ENCODE measurements at regions of chr1 and their contacts with region 1.

Region 1: GRCh38 chr1:66924756-66925557 is at the starts of genes DNAI4 and MIER1:
- DNase-seq: peak; percentile 96
- ATAC-seq: peak; percentile 95
- H3K4me3 ChIP-seq: peak within 1 kb of the TSS; percentile 78 to 97 (median 83)
- H3K27ac ChIP-seq: peak within 1 kb of the TSS; percentile 90
- H3K4me1 ChIP-seq: peaks cover 45% of the 10 kb centered on the region
- H3K27me3 ChIP-seq: no peaks in the 10 kb centered on the region; a peak in 1 of 5 replicates
- CTCF ChIP-seq: peak; percentile 46
- EP300 ChIP-seq: no peak
- POLR2A ChIP-seq: peak; percentile 71 to 75
- RAD21 ChIP-seq: peak; percentile 28; the same call in 1 of the 2 replicates
- total RNA-seq, gene DNAI4: 0.04 and 0.38 TPM in 2 replicates
- total RNA-seq, gene MIER1: 30.4 and 49.3 TPM in 2 replicates

Region 2: GRCh38 chr1:66764994-66765578 is 159.9 kb before region 1 on chr1:
- CTCF ChIA-PET with region 1: no interaction called
- POLR2A ChIA-PET with region 1: no interaction called
- in situ Hi-C with region 1: no loop called
- intact Hi-C with region 1: loop called (anchors 5 kb)
- DNase-seq: peak; percentile 24
- ATAC-seq: peak; percentile 56; the same call in 2 of the 3 replicates
- H3K4me3 ChIP-seq: no peak overlapping the region
- H3K27ac ChIP-seq: no peak overlapping the region
- H3K4me1 ChIP-seq: no peaks in the 10 kb centered on the region
- H3K27me3 ChIP-seq: no peaks in the 10 kb centered on the region
- CTCF ChIP-seq: peak; percentile 67
- EP300 ChIP-seq: no peak
- POLR2A ChIP-seq: no peak
- RAD21 ChIP-seq: peak; percentile 30; the same call in 1 of the 2 replicates

Region 3: GRCh38 chr1:66852870-66853269 is 72.1 kb before region 1 on chr1:
- CTCF ChIA-PET with region 1: no interaction called
- POLR2A ChIA-PET with region 1: no interaction called
- in situ Hi-C with region 1: no loop called
- intact Hi-C with region 1: no loop called
- DNase-seq: no peak
- ATAC-seq: no peak
- H3K4me3 ChIP-seq: no peak overlapping the region
- H3K27ac ChIP-seq: no peak overlapping the region
- H3K4me1 ChIP-seq: no peaks in the 10 kb centered on the region
- H3K27me3 ChIP-seq: no peaks in the 10 kb centered on the region
- CTCF ChIP-seq: no peak
- EP300 ChIP-seq: no peak
- POLR2A ChIP-seq: no peak
- RAD21 ChIP-seq: no peak

Region 4: GRCh38 chr1:66890621-66891020 is 34.3 kb before region 1 on chr1:
- CTCF ChIA-PET with region 1: no interaction called
- POLR2A ChIA-PET with region 1: no interaction called
- in situ Hi-C with region 1: no loop called
- intact Hi-C with region 1: no loop called
- DNase-seq: no peak
- ATAC-seq: no peak
- H3K4me3 ChIP-seq: no peak overlapping the region
- H3K27ac ChIP-seq: no peak overlapping the region
- H3K4me1 ChIP-seq: no peaks in the 10 kb centered on the region
- H3K27me3 ChIP-seq: no peaks in the 10 kb centered on the region
- CTCF ChIP-seq: no peak
- EP300 ChIP-seq: no peak
- POLR2A ChIP-seq: no peak
- RAD21 ChIP-seq: no peak

Region 5: GRCh38 chr1:66944330-66945274 is 19.6 kb after region 1 on chr1:
- CTCF ChIA-PET with region 1: no interaction called
- POLR2A ChIA-PET with region 1: interaction called, 19 read pairs
- in situ Hi-C with region 1: no loop called
- intact Hi-C with region 1: loop called (anchors 2 kb)
- DNase-seq: peak; percentile 79
- ATAC-seq: peak; percentile 95
- H3K4me3 ChIP-seq: no peak overlapping the region
- H3K27ac ChIP-seq: peak overlapping the region; percentile 59
- H3K4me1 ChIP-seq: peaks cover 47% of the 10 kb centered on the region
- H3K27me3 ChIP-seq: no peaks in the 10 kb centered on the region
- CTCF ChIP-seq: no peak
- EP300 ChIP-seq: peak in 1 of 2 experiments; percentile 31; a peak in 1 of 4 replicates
- POLR2A ChIP-seq: no peak
- RAD21 ChIP-seq: no peak

Region 6: DNA sequence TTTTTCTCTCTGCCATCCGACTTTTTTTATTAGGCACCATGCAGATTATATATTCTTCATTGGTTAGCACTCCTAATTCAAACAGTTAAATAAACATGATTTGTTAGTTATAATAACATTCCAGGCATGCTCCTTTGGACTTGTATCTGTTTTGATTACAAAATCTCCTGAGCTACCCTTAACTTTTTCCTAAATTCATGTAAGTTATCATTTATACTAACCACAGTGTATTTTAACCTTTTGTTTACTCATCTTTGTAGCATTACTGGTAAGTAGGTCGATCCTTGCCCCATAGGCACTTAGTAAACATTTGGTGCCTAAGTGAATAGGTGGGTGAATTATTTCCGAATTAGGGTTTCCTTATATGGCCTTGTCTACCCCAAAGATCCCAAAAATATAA is 43.6 kb after region 1 on chr1:
- CTCF ChIA-PET with region 1: no interaction called
- POLR2A ChIA-PET with region 1: no interaction called
- in situ Hi-C with region 1: no loop called
- intact Hi-C with region 1: no loop called
- DNase-seq: no peak
- ATAC-seq: no peak
- H3K4me3 ChIP-seq: no peak overlapping the region
- H3K27ac ChIP-seq: no peak overlapping the region
- H3K4me1 ChIP-seq: peaks cover 7% of the 10 kb centered on the region
- H3K27me3 ChIP-seq: no peaks in the 10 kb centered on the region
- CTCF ChIP-seq: no peak
- EP300 ChIP-seq: no peak
- POLR2A ChIP-seq: no peak
- RAD21 ChIP-seq: no peak

Region 7: DNA sequence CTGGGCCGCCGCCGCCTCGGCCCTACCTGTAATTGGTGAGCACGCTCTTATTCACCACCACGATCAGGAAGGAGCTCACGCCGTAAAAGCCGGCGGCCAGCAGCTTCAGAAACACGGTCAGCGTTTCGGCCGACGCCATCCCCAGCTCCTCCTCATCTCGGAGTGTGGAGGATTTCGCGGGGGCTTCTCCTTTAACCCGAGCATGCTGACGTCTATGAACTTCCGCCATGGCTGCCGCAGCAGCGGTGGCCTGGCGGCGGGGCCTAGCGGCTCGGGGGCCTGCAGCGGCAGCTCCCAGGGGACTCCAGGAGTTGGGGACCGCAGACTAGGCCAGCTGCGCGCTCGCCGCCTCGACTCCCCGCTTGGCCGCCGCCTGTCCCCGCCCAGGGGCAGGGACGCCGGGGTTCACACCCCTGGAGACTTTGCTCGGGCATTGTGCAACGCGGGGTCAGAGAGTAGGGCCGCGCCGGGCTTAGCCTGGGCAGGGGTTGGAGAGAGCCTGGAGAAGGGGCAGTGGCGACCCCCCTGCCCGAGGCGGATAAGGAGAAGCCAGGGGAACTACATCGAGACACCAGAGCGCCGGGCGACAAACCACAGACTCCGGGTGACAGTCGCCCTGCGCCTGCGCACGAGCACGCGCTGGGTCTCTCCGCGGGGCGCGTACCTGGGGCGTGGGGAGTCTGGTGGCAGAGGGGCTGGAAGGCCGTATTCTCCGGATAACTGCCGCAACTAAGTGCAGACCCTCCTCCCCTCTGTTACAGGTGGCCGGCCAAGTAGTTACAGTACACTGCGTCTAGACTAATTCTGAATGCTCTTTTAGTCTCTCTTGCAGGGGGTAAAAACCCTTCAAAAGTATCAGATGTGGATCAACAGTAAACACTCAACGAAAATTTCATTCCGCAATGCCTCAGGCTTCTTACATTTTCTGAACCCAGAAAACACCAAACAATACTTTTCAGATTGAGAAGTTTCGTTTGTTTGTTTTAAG is 129.1 kb after region 1 on chr1 and contains the start of gene SLC35D1:
- CTCF ChIA-PET with region 1: no interaction called
- POLR2A ChIA-PET with region 1: interaction called, 20 read pairs
- in situ Hi-C with region 1: loop called (anchors 5 kb)
- intact Hi-C with region 1: loop called (anchors 2 kb)
- DNase-seq: peak; percentile 86
- ATAC-seq: peak; percentile 90
- H3K4me3 ChIP-seq: peak within 1 kb of the TSS; percentile 85 to 96 (median 88)
- H3K27ac ChIP-seq: peak within 1 kb of the TSS; percentile 98
- H3K4me1 ChIP-seq: peaks cover 42% of the 10 kb centered on the region
- H3K27me3 ChIP-seq: no peaks in the 10 kb centered on the region; a peak in 1 of 5 replicates
- CTCF ChIP-seq: peak; percentile 40
- EP300 ChIP-seq: peak in 1 of 2 experiments; percentile 61; a peak in 1 of 4 replicates
- POLR2A ChIP-seq: peak; percentile 66 to 76
- RAD21 ChIP-seq: peak; percentile 30; the same call in 1 of the 2 replicates
- total RNA-seq, gene SLC35D1: 30.6 and 41.5 TPM in 2 replicates

Region 8: GRCh38 chr1:67404212-67404620 is 479.3 kb after region 1 on chr1:
- CTCF ChIA-PET with region 1: no interaction called
- POLR2A ChIA-PET with region 1: no interaction called
- in situ Hi-C with region 1: loop called (anchors 25 kb)
- intact Hi-C with region 1: no loop called
- DNase-seq: no peak
- ATAC-seq: no peak
- H3K4me3 ChIP-seq: no peak overlapping the region
- H3K27ac ChIP-seq: no peak overlapping the region
- H3K4me1 ChIP-seq: no peaks in the 10 kb centered on the region
- H3K27me3 ChIP-seq: no peaks in the 10 kb centered on the region
- CTCF ChIP-seq: no peak
- EP300 ChIP-seq: no peak
- POLR2A ChIP-seq: no peak
- RAD21 ChIP-seq: no peak

Region 9: GRCh38 chr1:67430352-67431155 is 505.6 kb after region 1 on chr1 and contains the start of gene SERBP1:
- CTCF ChIA-PET with region 1: no interaction called
- POLR2A ChIA-PET with region 1: interaction called, 4 read pairs
- in situ Hi-C with region 1: no loop called
- intact Hi-C with region 1: loop called (anchors 2 kb)
- DNase-seq: peak; percentile 96
- ATAC-seq: peak; percentile 95
- H3K4me3 ChIP-seq: peak within 1 kb of the TSS; percentile 74 to 96 (median 77)
- H3K27ac ChIP-seq: peak within 1 kb of the TSS; percentile 93
- H3K4me1 ChIP-seq: peaks cover 31% of the 10 kb centered on the region
- H3K27me3 ChIP-seq: no peaks in the 10 kb centered on the region; a peak in 1 of 5 replicates
- CTCF ChIP-seq: no peak
- EP300 ChIP-seq: no peak
- POLR2A ChIP-seq: peak; percentile 79 to 86
- RAD21 ChIP-seq: no peak
- total RNA-seq, gene SERBP1: 281 and 464 TPM in 2 replicates